ENCODE measurements at regions of chr2 and their contacts with region 1.

Region 1: DNA sequence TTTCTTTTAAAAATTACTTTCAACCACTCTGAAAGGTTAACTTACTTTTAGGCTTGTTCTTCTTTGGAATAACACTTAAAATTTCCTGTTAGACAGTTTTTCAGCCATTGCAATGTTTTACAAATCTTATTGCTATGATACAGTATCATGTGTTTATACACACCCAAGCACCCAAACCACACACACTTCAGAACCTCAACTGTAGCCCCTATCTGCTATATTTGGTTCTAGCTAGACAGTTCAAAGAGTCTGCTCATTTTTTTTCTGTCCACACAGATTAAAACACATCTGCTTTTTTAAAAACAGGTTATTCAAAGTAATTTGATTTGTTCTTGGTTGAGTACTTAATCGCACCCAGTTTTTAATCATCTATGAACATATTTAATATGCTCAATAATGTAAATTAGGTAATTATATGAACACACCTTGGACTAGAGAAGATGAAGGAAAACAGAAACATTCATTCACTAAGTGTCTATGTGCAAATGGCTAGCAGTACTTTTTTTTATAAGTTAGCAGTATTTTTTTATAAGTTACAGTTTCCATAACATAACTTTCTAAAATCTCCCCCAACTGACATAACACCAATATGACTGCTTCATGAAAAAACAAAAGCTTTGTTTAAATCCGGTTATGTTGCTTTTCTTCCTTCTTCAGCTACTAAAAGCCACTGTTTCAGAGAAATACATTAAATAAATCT is 17.6 kb downstream of the FBXO11 start:
- DNase-seq: peak in 26 of 35 experiments; percentile 12 to 73 (median 40)
- ATAC-seq: peak; percentile 84 to 99 (median 96)
- H3K4me3 ChIP-seq: no peak overlapping the region
- H3K4me3 Mint-ChIP-seq: peak overlapping the region; percentile 11 to 44 (median 39)
- H3K27ac ChIP-seq: peak overlapping the region; percentile 55
- H3K27ac Mint-ChIP-seq: peak overlapping the region; percentile 42 to 78
- H3K4me1 ChIP-seq: peaks cover 26 to 39% of the 10 kb centered on the region in 2 experiments
- H3K4me1 Mint-ChIP-seq: peaks cover 71 to 79% (median 77%) of the 10 kb centered on the region in 3 donors
- H3K27me3 ChIP-seq: no peaks in the 10 kb centered on the region
- H3K27me3 Mint-ChIP-seq: no peaks in the 10 kb centered on the region

Region 2: GRCh38 chr2:47906157-47907038 is 17.7 kb after region 1 on chr2 and contains the start of gene FBXO11:
- CTCF ChIA-PET with region 1: interaction called in 1 of 2 experiments, 20 read pairs
- POLR2A ChIA-PET with region 1: interaction called, 5 to 8 read pairs
- DNase-seq: peak; percentile 90 to 98 (median 96)
- ATAC-seq: peak; percentile 80 to 84 (median 81)
- H3K4me3 ChIP-seq: peak within 1 kb of the TSS; percentile 71 to 81
- H3K4me3 Mint-ChIP-seq: peak within 1 kb of the TSS; percentile 86 to 96 (median 88)
- H3K27ac ChIP-seq: peak within 1 kb of the TSS; percentile 97
- H3K27ac Mint-ChIP-seq: peak within 1 kb of the TSS; percentile 94
- H3K4me1 ChIP-seq: peaks cover 6 to 26% of the 10 kb centered on the region in 2 experiments
- H3K4me1 Mint-ChIP-seq: peaks cover 39 to 49% (median 41%) of the 10 kb centered on the region in 3 donors
- H3K27me3 ChIP-seq: no peaks in the 10 kb centered on the region
- H3K27me3 Mint-ChIP-seq: no peaks in the 10 kb centered on the region
- total RNA-seq, gene FBXO11: 70.2 to 90.0 (median 74.6) TPM

Region 3: DNA sequence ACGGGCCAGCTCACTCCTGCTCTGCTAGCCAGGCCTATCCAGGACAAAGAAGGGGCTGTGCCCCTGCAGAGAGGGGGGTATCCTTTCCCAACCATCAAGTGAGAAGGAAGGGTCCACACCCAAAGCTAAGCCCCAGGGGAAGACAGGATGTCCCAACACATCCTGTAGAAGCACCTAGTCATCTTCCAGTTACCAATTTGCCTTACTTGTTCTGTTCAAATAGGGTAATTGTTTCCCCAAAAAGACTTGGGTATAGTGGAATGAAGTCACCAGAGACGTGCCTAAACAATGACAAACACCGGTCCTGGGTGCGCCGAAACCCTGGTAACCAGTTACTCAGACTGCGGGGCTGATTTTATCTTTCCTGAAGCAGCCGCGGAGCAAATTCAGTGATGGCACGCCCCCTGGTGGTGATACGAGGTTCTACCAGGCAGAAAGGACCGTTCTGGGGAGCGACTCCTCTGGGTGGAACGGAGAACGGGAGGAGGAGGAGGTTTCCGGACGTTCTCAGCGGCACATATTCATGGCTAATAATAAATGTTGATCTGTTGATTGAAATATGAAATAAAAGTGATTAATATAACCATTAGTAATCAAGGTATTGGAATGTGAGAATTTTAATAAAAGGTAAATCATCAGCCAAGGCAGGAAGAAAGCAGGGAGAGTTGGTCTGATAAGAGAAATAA is 531.9 kb after region 1 on chr2:
- CTCF ChIA-PET with region 1: interaction called in 1 of 2 experiments, 11 read pairs
- POLR2A ChIA-PET with region 1: no interaction called
- DNase-seq: peak; percentile 72 to 94 (median 88)
- ATAC-seq: peak; percentile 88 to 94 (median 94)
- H3K4me3 ChIP-seq: peak overlapping the region in 1 of 2 donors; percentile 38
- H3K4me3 Mint-ChIP-seq: peak overlapping the region in 2 of 3 donors; percentile 26 to 46
- H3K27ac ChIP-seq: no peak overlapping the region
- H3K27ac Mint-ChIP-seq: peak overlapping the region in 1 of 2 donors; percentile 54
- H3K4me1 ChIP-seq: peaks cover 14 to 17% of the 10 kb centered on the region in 2 experiments
- H3K4me1 Mint-ChIP-seq: peaks cover 22 to 32% (median 27%) of the 10 kb centered on the region in 3 donors
- H3K27me3 ChIP-seq: peaks cover 0 to 4% of the 10 kb centered on the region in 2 experiments
- H3K27me3 Mint-ChIP-seq: peaks cover 3 to 7% of the 10 kb centered on the region in 2 donors

Measured in T-cell (primary cell).